ENCODE measurements at regions of chr18 and their contacts with region 1.

Region 1: DNA sequence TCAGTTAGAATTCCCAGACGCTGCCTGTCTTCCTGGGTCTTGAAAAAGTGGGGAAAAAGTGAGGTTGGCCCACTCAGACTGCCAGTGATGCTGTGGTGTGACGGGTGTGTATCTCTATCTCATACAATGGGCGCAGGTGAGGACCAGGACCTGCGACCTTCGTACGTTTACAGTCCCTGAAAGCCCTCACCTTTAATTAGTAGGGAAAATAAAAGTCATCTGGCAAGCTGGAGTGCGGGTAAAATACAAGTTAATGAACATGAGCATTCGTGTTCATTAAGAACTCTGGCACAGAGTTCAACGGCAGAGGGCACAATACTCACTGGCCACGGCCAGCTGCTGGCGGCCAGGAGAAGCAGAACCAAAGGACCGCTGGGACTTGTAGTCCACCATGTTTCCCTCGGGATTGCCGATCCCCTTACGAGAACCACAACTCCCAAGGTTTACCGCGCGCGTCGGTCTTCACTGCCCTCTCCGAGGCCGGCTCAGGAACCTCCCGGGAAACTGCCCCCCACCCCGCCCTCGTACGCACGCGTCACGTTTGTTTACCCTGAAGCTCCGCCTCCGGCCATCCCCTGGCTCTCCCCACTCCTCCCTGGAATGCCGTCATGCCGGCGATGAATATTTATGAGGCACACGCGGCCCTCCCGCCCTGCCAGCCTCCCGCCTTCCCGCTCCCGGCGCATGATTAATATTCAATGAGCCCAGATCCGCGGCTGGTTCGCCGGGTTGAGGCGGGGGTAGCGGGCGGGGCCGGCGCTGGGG is 488 bp upstream of the PHLPP1 start:
- DNase-seq: peak; percentile 98
- H3K4me3 Mint-ChIP-seq: peak overlapping the region; percentile 79
- H3K27ac Mint-ChIP-seq: peak overlapping the region; percentile 74
- H3K4me1 Mint-ChIP-seq: peaks cover 26% of the 10 kb centered on the region
- H3K27me3 Mint-ChIP-seq: peaks cover 6% of the 10 kb centered on the region

Region 2: DNA sequence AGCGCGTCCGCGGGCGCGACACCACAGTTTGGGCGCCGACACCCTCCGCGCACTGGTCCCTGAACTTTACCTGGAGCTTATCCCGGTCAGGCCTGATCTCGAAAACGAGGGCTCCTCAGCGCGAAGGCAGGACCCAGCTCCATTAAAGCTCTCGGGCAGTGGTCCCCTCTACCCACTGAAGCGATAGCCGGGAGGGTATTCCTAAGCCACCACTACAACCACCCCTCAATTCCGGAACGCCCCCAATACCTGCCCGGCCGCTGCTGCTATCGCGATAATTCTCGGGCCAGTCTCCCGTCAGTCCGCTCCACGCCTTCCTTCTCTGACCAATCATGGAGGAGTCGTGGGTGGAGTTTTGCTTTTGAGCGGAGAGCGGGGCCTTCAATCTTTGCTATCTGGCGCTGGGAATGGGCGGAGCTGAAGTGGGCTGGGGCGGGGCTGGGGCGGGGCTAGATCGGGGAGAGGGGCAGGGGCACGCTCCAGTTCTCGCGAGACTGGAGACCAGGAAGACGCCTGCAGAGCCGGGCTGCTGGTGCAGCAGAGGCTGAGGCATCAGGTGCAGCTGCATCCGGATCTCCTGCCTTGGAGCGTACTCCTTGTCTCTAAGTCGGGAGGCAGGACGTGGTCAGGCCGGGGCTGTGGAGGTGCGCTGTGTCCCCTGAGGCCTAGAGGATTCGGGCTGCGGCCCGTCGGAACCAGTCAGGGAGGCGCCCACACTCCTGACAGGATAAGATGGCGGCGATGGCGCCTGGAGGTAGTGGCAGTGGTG is 527.9 kb before region 1 on chr18 and contains the starts of genes PIGN and RELCH:
- CTCF ChIA-PET with region 1: no interaction called
- intact Hi-C with region 1: loop called (anchors 1 kb)
- DNase-seq: peak; percentile 97
- H3K4me3 Mint-ChIP-seq: peak within 1 kb of the TSS; percentile 99
- H3K27ac Mint-ChIP-seq: peak within 1 kb of the TSS; percentile 90
- H3K4me1 Mint-ChIP-seq: peaks cover 45% of the 10 kb centered on the region
- H3K27me3 Mint-ChIP-seq: no peaks in the 10 kb centered on the region
- total RNA-seq, gene PIGN: 21.2 to 22.6 TPM
- total RNA-seq, gene RELCH: 15.7 to 16.3 TPM

Region 3: GRCh38 chr18:62522504-62523254 is 192.2 kb before region 1 on chr18 and contains the start of gene ZCCHC2:
- CTCF ChIA-PET with region 1: no interaction called
- intact Hi-C with region 1: loop called (anchors 1 kb)
- DNase-seq: peak; percentile 98
- H3K4me3 Mint-ChIP-seq: peak within 1 kb of the TSS; percentile 92
- H3K27ac Mint-ChIP-seq: peak within 1 kb of the TSS; percentile 98
- H3K4me1 Mint-ChIP-seq: peaks cover 14% of the 10 kb centered on the region
- H3K27me3 Mint-ChIP-seq: no peaks in the 10 kb centered on the region
- total RNA-seq, gene ZCCHC2: 22.1 to 23.3 TPM

Region 4: DNA sequence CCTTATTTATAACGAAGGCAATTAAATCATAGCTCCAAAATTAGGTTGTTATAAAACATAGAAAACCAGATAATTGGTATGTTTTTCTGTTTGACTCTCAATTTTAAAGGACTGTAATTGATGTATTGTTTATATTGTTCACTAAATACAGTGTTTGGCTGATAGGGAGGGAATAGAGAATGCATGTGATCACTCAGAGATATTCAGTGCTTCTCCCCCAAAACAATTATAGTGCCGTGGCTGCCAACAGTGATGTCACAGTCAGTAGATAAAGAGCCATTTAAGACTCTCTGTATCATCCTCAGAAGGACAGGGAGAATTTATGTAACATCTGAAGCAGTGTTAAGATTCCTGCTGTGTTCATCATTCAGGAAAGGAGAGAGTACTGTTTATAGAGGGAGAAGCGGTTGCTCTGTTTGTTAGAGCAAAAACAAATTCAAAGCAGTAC is 70.1 kb after region 1 on chr18:
- CTCF ChIA-PET with region 1: interaction called, 3 read pairs
- intact Hi-C with region 1: loop called (anchors 1 kb)
- DNase-seq: no peak
- H3K4me3 Mint-ChIP-seq: no peak overlapping the region
- H3K27ac Mint-ChIP-seq: no peak overlapping the region
- H3K4me1 Mint-ChIP-seq: peaks cover 37% of the 10 kb centered on the region
- H3K27me3 Mint-ChIP-seq: peaks cover 5% of the 10 kb centered on the region

Region 5: DNA sequence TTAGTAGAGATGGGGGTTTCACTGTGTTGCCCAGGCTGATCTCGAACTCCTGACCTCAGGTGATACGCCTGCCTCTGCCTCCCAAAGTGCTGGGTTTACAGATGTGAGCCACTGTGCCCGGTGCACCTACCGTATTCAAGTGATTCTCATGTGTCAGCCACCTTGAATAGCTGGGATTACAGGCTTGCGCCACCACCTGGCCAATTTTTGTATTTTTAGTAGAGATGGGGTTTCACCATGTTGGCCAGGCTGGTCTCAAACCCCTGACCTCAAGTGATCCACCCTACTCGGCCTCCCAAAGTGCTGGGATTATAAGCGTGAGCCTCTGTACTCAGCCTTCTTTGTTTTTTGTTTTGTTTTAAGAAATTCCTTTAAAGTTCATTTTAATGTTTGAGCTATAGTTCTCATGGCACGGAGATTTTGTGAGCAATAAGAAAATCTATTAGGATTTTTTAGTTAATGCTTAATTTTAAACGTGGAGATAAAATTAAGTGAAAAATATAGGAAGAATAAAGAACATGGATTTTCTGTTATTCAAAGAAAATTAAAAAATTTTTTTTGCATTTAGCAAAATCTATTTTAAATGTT is 243.1 kb after region 1 on chr18:
- CTCF ChIA-PET with region 1: interaction called, 31 read pairs
- intact Hi-C with region 1: loop called (anchors 1 kb)
- DNase-seq: peak; percentile 74
- H3K4me3 Mint-ChIP-seq: no peak overlapping the region
- H3K27ac Mint-ChIP-seq: no peak overlapping the region
- H3K4me1 Mint-ChIP-seq: peaks cover 12% of the 10 kb centered on the region
- H3K27me3 Mint-ChIP-seq: no peaks in the 10 kb centered on the region

Region 6: DNA sequence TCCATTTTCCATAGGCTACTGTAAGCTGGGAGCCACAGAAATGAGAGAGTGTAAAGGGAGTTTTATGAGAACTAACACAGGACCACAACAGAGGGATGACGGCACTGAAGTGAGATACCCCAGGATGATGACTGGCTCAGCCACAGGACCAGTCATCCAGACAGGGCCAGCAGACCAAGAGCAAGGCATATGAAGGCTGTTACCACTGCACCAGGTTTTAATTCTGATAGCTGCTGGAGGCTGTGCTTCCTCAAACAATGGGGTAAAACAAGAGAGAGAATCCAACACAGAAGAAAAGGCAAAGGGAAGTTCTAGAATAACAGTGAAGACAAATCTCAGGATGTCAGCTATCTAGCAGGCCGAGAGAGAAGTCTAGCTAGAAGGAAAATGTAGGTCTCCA is 509.8 kb after region 1 on chr18:
- CTCF ChIA-PET with region 1: no interaction called
- intact Hi-C with region 1: loop called (anchors 5 kb)
- DNase-seq: peak; percentile 81
- H3K4me3 Mint-ChIP-seq: peak overlapping the region; percentile 45
- H3K27ac Mint-ChIP-seq: peak overlapping the region; percentile 85
- H3K4me1 Mint-ChIP-seq: peaks cover 80% of the 10 kb centered on the region
- H3K27me3 Mint-ChIP-seq: no peaks in the 10 kb centered on the region

Region 7: GRCh38 chr18:63949068-63949737 is 1234.3 kb after region 1 on chr18 and contains the start of gene HMSD:
- CTCF ChIA-PET with region 1: no interaction called
- intact Hi-C with region 1: loop called (anchors 5 kb)
- DNase-seq: peak; percentile 89
- H3K4me3 Mint-ChIP-seq: peak within 1 kb of the TSS; percentile 82
- H3K27ac Mint-ChIP-seq: peak within 1 kb of the TSS; percentile 86
- H3K4me1 Mint-ChIP-seq: peaks cover 43% of the 10 kb centered on the region
- H3K27me3 Mint-ChIP-seq: peaks cover 26% of the 10 kb centered on the region
- total RNA-seq, gene HMSD: 25.0 to 31.7 TPM